ENCODE measurements at regions of chr7 and their contacts with region 1.

Region 1: GRCh38 chr7:5665094-5666025 is 116.1 kb downstream of the RNF216 start:
- DNase-seq: peak; percentile 70
- H3K4me3 ChIP-seq: no peak overlapping the region
- H3K27ac ChIP-seq: no peak overlapping the region
- H3K4me1 ChIP-seq: peaks cover 5% of the 10 kb centered on the region
- H3K27me3 ChIP-seq: no peaks in the 10 kb centered on the region
- CTCF ChIP-seq: peak; percentile 40 to 81 (median 74)
- POLR2A ChIP-seq: no peak

Region 2: GRCh38 chr7:5231811-5232484 is 433.4 kb before region 1 on chr7:
- intact Hi-C with region 1: loop called (anchors 10 kb)
- DNase-seq: no peak
- H3K4me3 ChIP-seq: no peak overlapping the region
- H3K27ac ChIP-seq: peak overlapping the region in 1 of 2 donors; percentile 29
- H3K4me1 ChIP-seq: peaks cover 7% of the 10 kb centered on the region
- H3K27me3 ChIP-seq: no peaks in the 10 kb centered on the region
- CTCF ChIP-seq: no peak
- POLR2A ChIP-seq: no peak

Region 3: GRCh38 chr7:5435289-5436002 is 229.9 kb before region 1 on chr7:
- intact Hi-C with region 1: no loop called
- DNase-seq: no peak
- H3K4me3 ChIP-seq: no peak overlapping the region
- H3K27ac ChIP-seq: no peak overlapping the region
- H3K4me1 ChIP-seq: peaks cover 1% of the 10 kb centered on the region
- H3K27me3 ChIP-seq: no peaks in the 10 kb centered on the region
- CTCF ChIP-seq: no peak
- POLR2A ChIP-seq: no peak

Region 4: DNA sequence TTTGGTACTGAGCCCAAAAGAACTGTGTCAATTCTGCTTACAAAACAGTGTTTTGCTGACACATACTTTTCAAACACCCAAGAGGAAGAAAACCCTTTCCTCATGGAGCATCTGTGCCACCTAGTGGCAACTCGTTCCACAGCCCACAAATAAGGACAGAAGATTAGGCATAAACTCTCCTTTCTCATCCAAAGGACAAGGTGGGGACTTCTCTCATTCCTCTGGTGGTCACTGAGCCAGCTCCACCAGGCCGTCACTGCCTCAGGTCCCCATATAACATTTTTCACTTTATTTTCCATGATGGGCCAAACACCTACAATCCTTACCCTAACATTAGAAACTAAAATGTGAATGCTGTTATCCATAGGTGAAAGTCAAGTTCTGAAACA is 39.2 kb after region 1 on chr7:
- intact Hi-C with region 1: loop called (anchors 5 kb)
- DNase-seq: peak; percentile 80
- H3K4me3 ChIP-seq: no peak overlapping the region
- H3K27ac ChIP-seq: peak overlapping the region in 1 of 2 donors; percentile 53
- H3K4me1 ChIP-seq: no peaks in the 10 kb centered on the region
- H3K27me3 ChIP-seq: no peaks in the 10 kb centered on the region
- CTCF ChIP-seq: peak; percentile 66 to 95 (median 90)
- POLR2A ChIP-seq: no peak

Measured in prostate gland (tissue), 2 donors.